ENCODE measurements at regions of chr5 and their contacts with region 1.

Region 1: GRCh38 chr5:170225326-170226128 is 7.3 kb upstream of the C5orf58 start:
- DNase-seq: peak; percentile 83
- H3K4me3 Mint-ChIP-seq: no peak overlapping the region
- H3K27ac Mint-ChIP-seq: no peak overlapping the region
- H3K4me1 Mint-ChIP-seq: no peaks in the 10 kb centered on the region
- H3K27me3 Mint-ChIP-seq: peaks cover 17% of the 10 kb centered on the region
- CTCF ChIP-seq: peak; percentile 86

Region 2: DNA sequence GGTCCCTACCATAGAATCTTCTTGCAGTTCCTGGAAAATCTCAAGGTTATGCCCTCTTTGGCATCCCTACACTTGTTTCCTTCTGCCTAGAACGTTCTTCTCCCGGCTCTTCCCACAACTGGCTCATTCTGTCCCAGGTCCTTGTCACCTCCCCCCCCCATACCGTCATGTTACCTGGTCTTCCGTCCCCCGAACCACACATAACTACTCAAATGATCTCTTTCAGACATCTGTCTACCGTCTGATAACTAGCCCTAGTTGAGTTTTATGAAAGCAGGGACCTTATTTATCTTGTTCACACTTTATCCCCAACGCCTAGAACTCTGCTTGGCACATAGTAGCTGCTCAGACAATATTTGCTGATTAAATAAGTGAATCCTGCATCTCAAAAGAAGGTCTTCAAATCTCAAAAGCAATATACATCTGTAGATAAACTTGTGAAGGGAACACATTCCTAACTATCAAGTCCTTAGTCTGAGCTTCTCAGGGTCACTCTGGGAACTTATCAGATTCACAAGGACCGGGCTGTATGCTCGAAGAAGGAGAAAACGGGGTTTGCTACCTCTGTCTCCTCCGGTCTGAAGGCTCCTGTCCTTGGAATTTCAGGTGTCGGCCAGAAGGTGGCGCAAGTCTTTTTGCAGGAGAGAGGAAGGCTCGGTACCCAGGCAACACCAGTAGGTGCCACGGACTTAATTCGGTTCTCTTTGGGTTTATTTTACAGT is 42.1 kb after region 1 on chr5:
- CTCF ChIA-PET with region 1: interaction called, 9 read pairs
- intact Hi-C with region 1: loop called (anchors 5 kb)
- DNase-seq: peak; percentile 82
- H3K4me3 Mint-ChIP-seq: no peak overlapping the region
- H3K27ac Mint-ChIP-seq: no peak overlapping the region
- H3K4me1 Mint-ChIP-seq: peaks cover 14% of the 10 kb centered on the region
- H3K27me3 Mint-ChIP-seq: peaks cover 70% of the 10 kb centered on the region
- CTCF ChIP-seq: peak; percentile 82

Region 3: GRCh38 chr5:170338933-170339779 is 113.6 kb after region 1 on chr5:
- CTCF ChIA-PET with region 1: interaction called, 26 read pairs
- intact Hi-C with region 1: loop called (anchors 1 kb)
- DNase-seq: peak; percentile 44
- H3K4me3 Mint-ChIP-seq: no peak overlapping the region
- H3K27ac Mint-ChIP-seq: no peak overlapping the region
- H3K4me1 Mint-ChIP-seq: no peaks in the 10 kb centered on the region
- H3K27me3 Mint-ChIP-seq: peaks cover 60% of the 10 kb centered on the region
- CTCF ChIP-seq: peak; percentile 73